ENCODE measurements at regions of chr7 and their contacts with region 1.

Region 1: DNA sequence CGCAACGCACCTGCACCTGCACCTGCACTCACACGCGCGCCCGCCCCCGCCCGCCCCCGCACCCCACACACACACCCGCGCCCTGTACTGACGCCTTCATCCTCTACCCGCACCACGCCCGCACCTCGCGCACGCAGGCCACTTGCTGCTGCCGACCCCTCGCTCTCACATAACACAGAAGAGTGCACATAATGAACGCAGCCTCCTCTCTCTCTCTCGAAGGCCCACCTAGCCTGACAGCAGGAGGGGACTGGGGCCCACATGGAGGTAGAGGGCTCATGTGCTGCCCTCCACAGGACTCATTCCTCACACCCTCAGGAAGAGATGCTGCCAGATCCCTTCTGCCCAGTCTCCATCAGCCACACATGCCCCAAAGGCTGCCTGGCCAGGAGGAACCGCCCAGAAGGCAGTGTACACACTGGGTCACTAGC is 432 bp upstream of the CAMK2B start:
- DNase-seq: no peak
- ATAC-seq: peak; percentile 27 to 47 (median 35)
- H3K4me3 ChIP-seq: peak overlapping the region; percentile 44
- H3K27ac ChIP-seq: peak overlapping the region; percentile 36
- H3K4me1 ChIP-seq: peaks cover 29% of the 10 kb centered on the region
- H3K27me3 ChIP-seq: peaks cover 0 to 11% (median 0%) of the 10 kb centered on the region in 3 donors
- CTCF ChIP-seq: peak; percentile 13

Region 2: GRCh38 chr7:44240983-44241510 is 84.8 kb before region 1 on chr7:
- intact Hi-C with region 1: loop called in 1 of 2 experiments (anchors 5 kb)
- DNase-seq: peak; percentile 74 to 87
- ATAC-seq: peak; percentile 89 to 96 (median 92)
- H3K4me3 ChIP-seq: no peak overlapping the region
- H3K27ac ChIP-seq: no peak overlapping the region
- H3K4me1 ChIP-seq: peaks cover 7% of the 10 kb centered on the region
- H3K27me3 ChIP-seq: no peaks in the 10 kb centered on the region
- CTCF ChIP-seq: peak; percentile 67

Region 3: DNA sequence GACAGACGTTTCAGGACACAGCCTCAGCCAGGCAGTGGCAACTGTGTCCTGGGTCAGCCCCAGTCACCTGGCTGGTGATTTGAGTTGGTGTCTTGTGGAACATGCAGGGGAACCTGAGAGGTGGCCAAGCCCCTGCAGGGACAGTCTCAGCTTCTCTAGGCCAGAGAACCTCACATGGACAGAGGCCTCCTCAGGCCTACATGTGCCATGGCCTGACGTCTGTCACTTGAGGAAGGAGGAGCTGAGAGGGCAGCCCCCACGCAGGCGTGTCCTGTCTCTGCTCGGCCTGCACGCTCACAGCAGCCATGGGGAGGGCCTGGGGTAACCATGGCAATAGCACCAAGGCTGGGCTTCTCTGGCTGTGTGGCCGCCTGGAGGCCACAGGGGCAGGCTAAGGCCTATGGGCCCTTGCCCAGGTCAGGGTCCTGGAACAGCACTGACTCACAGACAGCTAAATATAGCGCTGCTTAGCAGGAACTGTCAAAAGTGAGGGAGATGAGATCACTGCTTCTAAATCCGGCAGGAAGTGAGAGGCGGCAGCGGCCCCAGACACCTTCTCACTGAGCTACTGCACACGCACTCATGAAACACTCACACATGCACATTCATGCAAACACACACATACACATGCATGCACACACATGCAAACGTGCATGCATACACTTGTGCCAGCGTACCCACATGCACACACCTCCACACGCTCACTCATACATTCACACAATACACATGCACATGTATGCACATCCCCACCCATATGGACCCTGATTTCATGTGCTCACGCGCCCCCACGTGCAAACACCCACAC is 68.0 kb before region 1 on chr7:
- intact Hi-C with region 1: loop called in 1 of 2 experiments (anchors 5 kb)
- DNase-seq: peak; percentile 85 to 89
- ATAC-seq: peak; percentile 92 to 94 (median 93)
- H3K4me3 ChIP-seq: no peak overlapping the region
- H3K27ac ChIP-seq: peak overlapping the region; percentile 94
- H3K4me1 ChIP-seq: peaks cover 72% of the 10 kb centered on the region
- H3K27me3 ChIP-seq: no peaks in the 10 kb centered on the region
- CTCF ChIP-seq: peak; percentile 30

Region 4: DNA sequence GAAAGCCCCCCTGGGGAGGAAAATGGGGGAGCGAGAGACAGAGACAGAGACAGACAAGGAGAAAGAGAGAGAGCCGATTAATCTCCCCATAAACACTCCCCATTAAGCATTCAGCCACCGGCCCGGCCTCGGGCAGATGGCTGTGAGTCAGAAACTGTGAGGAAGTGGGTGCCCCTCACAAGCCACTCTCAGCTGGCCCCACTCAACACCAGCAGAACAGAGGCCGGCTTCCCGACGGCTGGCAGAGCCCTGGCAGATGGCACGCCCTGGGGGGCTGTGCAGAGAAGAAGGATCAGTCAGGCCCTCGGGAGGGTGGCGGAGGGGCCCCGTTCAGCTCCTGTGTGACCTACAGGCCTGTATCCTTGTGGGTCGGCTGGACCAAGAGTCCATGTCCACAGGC is 41.6 kb before region 1 on chr7:
- intact Hi-C with region 1: loop called in 1 of 2 experiments (anchors 5 kb)
- DNase-seq: peak; percentile 16 to 35
- ATAC-seq: no peak
- H3K4me3 ChIP-seq: no peak overlapping the region
- H3K27ac ChIP-seq: peak overlapping the region; percentile 95
- H3K4me1 ChIP-seq: peaks cover 55% of the 10 kb centered on the region
- H3K27me3 ChIP-seq: no peaks in the 10 kb centered on the region
- CTCF ChIP-seq: no peak

Region 5: DNA sequence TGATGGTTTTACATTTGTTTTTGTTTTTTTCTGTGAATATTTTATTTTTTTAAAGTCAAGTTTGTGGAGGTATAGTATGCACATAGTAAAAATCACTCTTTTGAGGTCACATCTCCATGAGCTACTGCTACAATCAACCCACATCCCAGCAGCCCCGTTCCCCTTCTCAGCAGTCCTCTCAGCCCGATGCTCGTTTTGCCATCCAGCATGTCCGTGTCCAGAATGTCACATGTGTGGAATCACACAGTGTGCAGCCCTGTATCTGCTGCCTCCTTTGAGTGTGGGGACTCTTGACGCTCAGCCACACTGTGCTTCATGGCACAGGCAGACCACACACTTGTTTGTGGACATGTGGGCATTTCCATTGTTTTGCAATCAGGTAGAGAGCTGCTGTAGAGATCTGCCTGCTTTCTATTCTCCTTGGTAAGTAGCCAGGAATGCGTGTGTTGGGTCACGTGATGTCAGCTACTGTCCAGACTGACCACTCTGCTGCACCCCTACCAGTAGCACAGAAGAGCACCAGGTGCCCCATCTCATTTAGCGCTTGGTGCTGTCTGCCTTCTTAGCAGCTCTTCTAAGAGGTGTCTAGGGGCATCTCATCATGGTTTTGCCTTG is 71.2 kb after region 1 on chr7:
- intact Hi-C with region 1: loop called in 1 of 2 experiments (anchors 2 kb)
- DNase-seq: no peak
- ATAC-seq: peak in 2 of 4 donors; percentile 18 to 20
- H3K4me3 ChIP-seq: no peak overlapping the region
- H3K27ac ChIP-seq: peak overlapping the region; percentile 87
- H3K4me1 ChIP-seq: peaks cover 42% of the 10 kb centered on the region
- H3K27me3 ChIP-seq: no peaks in the 10 kb centered on the region
- CTCF ChIP-seq: no peak

Measured in psoas muscle (tissue), 8 donors.